ENCODE measurements at regions of chr11 and their contacts with region 1.

Region 1: GRCh38 chr11:78645226-78646202 is 70.8 kb upstream of the NARS2 start:
- DNase-seq: peak; percentile 52
- H3K4me3 Mint-ChIP-seq: no peak overlapping the region
- H3K27ac Mint-ChIP-seq: no peak overlapping the region
- H3K4me1 Mint-ChIP-seq: peaks cover 52% of the 10 kb centered on the region
- H3K27me3 Mint-ChIP-seq: no peaks in the 10 kb centered on the region

Region 2: DNA sequence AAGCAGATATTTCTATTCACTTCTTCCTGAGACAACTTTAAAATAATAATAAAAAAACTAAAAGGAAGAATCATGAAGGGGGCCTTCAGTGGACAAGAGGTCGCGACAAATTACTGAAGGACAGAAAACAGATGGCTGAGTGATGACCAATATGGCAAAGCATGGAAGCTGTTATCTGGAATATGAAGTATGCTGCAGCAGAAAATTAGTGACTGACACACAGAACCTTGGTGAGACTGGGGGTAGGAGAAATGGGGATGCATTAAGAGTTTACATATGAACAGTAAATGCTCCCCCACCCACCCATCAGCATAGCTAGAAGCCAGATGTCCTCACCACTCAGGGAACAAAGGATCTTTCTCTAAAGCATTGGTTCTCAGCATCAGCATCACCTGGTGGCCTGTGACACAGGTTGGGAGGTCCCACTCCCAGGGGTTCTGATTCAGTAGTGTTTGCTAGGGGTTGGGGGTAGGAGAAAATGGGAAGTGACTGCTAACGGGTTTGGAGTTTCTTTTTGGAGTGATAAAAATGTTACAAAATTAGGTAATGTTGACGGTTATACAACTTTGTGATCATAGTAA is 130.5 kb before region 1 on chr11:
- intact Hi-C with region 1: no loop called
- DNase-seq: no peak
- H3K4me3 Mint-ChIP-seq: no peak overlapping the region
- H3K27ac Mint-ChIP-seq: no peak overlapping the region
- H3K4me1 Mint-ChIP-seq: no peaks in the 10 kb centered on the region
- H3K27me3 Mint-ChIP-seq: no peaks in the 10 kb centered on the region

Region 3: DNA sequence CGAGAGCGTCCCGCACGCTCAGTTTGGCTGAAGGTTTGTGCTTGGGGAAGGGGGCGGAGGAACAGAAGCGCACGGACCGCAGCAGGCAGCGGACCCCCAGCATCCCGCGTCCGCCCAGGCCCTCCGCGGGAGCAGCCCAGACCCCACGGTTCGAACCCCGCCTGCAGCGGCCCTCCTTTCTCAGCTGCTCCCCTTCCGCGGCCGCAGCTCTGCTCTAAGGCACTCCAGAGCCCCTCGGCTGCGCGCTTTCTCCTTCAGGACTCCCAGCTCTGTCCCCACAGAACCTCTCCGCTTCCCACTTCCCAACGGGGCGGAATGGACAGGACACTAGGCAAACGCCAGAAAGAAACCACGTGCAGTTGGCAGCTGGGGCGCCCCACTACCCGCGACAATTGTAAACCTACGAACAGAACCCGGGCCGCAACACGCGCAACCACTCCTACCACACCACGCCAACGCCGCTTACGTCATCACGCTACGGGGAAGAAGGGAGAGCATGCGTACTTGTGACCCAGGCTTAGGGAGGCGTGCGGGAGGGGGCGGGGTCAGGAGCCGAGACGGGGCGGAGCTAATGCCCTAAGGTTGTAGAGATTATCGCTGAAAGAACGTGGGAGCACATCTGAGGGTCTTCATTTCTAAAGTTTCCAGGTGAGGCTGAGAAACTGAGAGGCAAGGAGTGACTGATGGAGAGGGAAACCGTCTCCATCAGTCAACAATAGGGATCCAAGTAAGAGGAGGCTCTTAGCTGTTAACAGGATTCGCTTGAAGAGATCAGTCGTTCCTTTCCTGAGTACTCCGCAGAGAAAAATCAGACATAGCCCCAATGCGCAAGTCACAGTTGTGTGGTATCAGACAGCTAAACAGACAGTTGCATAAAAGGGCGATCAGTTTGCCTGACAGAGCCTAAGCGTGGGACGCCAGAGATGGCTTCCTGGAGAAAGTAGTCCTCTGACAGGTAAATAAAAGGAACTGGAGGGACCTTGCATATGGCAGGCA is 70.8 kb before region 1 on chr11 and contains the start of gene NARS2:
- intact Hi-C with region 1: loop called (anchors 2 kb)
- DNase-seq: peak; percentile 95
- H3K4me3 Mint-ChIP-seq: peak within 1 kb of the TSS; percentile 93
- H3K27ac Mint-ChIP-seq: peak within 1 kb of the TSS; percentile 93
- H3K4me1 Mint-ChIP-seq: peaks cover 31% of the 10 kb centered on the region
- H3K27me3 Mint-ChIP-seq: peaks cover 3% of the 10 kb centered on the region
- total RNA-seq, gene NARS2: 34.1 and 37.7 TPM in 2 replicates

Region 4: DNA sequence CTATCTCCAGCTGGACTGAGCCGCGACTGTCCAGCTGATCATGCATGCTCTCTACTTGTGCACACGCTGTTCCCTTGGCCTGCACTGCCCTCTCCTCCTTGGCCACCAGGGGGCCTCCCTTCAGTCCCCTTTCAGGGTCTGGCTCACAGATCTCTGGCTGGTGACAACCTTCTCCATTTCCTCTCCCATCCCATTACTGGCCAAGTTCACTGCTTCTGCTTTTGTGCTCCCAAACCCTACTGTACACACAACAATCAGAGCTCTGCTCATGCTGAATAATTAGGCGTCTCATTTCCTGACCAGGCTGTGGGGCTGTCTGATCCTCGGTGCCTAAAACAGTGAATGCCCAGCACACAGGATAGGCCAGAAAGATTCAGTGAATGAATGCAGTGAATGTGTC is 153.1 kb after region 1 on chr11:
- intact Hi-C with region 1: loop called (anchors 5 kb)
- DNase-seq: peak; percentile 18
- H3K4me3 Mint-ChIP-seq: no peak overlapping the region
- H3K27ac Mint-ChIP-seq: no peak overlapping the region
- H3K4me1 Mint-ChIP-seq: no peaks in the 10 kb centered on the region
- H3K27me3 Mint-ChIP-seq: no peaks in the 10 kb centered on the region

Region 5: GRCh38 chr11:79076526-79077115 is 431.1 kb after region 1 on chr11:
- intact Hi-C with region 1: loop called (anchors 1 kb)
- DNase-seq: no peak
- H3K4me3 Mint-ChIP-seq: no peak overlapping the region
- H3K27ac Mint-ChIP-seq: no peak overlapping the region
- H3K4me1 Mint-ChIP-seq: no peaks in the 10 kb centered on the region
- H3K27me3 Mint-ChIP-seq: no peaks in the 10 kb centered on the region

Region 6: DNA sequence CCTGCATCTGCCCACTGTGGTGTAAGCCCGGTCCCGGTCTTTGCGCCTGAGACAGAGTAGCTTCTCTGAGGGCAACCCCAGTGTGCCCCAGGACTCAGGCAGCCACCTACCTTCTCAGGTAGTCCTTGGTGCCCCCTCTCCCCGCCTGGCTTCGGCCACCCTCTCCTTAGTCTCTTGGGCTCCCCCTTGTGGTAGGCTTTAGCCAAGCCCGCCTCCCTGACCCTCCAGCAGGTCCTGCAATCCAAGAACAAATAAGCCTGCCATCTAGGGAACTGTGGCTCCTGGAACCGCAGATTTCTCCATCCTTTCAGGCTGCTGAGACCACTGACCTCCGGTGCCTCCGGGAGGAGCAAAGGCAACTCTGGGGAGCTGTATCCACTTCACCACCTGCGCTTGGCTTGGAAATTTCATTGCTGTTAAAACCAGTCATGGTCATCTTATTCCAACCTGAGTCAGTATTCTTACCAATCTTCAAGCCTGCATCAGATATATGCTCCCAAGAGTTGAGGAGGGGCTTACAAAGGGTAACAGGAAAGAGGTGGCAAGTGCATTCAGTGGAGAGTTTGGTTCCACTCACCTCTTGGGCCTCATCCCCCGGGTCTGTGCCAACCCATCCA is 848.1 kb after region 1 on chr11:
- intact Hi-C with region 1: loop called (anchors 5 kb)
- DNase-seq: peak; percentile 11
- H3K4me3 Mint-ChIP-seq: no peak overlapping the region
- H3K27ac Mint-ChIP-seq: no peak overlapping the region
- H3K4me1 Mint-ChIP-seq: no peaks in the 10 kb centered on the region
- H3K27me3 Mint-ChIP-seq: no peaks in the 10 kb centered on the region

Measured in activated T-helper 2 cell treated with anti-CD3 and anti-CD28 coated beads, Interferon-gamma antibody, Interleukin-2, Interleukin-4, amounts not matched to agents 10 μg/mL and 5 μg/mL and 100 μg/mL, durations not matched to agents 14 hours and 24 hours and 36 hours (primary cell).